Sigmoid colon (tissue), 7 donors: ENCODE measurements at regions of chr1 and their contacts with region 1.

Region 1: DNA sequence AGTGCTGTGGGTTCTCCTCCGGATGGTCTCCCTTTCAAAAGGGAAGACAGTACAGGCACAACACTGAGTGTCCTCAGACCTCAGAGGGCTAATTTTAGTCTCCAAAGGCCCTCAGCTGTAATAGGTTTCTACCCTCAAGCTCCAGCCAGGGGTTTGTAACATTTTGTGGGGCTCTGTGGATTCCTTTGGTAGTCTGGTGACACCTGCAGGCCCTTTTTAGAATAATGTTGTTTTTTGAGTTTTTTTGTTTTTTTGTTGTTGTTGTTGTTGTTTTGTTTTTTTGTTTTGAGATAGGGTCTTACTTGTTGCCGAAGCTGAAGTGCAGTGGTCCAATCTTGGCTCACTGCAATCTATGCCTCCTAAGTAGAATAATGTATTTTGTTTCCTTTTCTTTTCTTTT is 15.0 kb upstream of the TMEM201 start:
- DNase-seq: no peak
- H3K4me3 ChIP-seq: no peak overlapping the region
- H3K27ac ChIP-seq: no peak overlapping the region
- H3K4me1 ChIP-seq: no peaks in the 10 kb centered on the region
- H3K27me3 ChIP-seq: no peaks in the 10 kb centered on the region
- CTCF ChIP-seq: peak in 3 of 4 experiments; percentile 16 to 46 (median 38)
- EP300 ChIP-seq: no peak
- POLR2A ChIP-seq: no peak

Region 2: DNA sequence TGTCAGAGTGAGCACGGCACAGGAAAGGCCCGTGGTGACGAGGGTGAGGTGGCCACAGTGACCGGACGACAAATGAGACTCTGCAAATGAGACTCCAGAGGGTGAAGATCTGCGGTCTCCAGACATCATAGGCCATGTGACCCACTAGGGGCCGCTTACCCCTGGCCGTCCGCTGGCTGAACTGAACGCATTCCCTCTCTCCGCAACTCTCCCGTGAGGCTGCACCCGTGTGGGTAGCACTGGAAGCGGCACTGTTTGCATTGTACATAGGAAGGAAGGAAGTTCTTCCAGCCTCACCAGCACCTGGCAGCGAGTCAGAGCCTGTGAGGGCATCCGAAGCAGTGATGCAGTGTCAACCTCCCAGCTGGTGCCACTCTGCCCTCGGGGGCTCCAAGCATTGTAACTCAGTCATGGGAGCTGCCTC is 304.6 kb before region 1 on chr1:
- intact Hi-C with region 1: loop called (anchors 10 kb)
- DNase-seq: no peak
- H3K4me3 ChIP-seq: no peak overlapping the region
- H3K27ac ChIP-seq: no peak overlapping the region
- H3K4me1 ChIP-seq: peaks cover 0 to 27% (median 18%) of the 10 kb centered on the region in 4 donors
- H3K27me3 ChIP-seq: no peaks in the 10 kb centered on the region
- CTCF ChIP-seq: no peak
- EP300 ChIP-seq: no peak
- POLR2A ChIP-seq: no peak

Region 3: DNA sequence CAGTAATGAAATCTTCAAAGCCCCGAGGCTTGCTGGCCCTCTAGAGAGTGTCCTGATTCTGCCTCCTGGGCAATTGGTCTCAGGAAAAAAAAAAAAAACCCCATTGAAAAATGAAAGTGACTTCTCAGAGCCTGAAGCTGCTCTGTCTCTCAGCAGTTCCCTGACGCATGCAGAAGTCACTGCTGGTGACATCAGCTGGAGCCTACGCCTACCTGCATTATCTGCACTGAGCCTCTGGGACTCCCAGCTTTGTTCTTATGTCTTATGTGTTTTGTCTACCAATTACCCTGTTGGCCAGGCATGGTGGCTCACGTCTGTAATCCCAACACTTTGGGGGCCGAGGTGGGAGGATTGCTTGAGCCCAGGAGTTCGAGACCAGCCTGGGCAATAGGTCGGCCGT is 44.5 kb before region 1 on chr1:
- intact Hi-C with region 1: loop called (anchors 5 kb)
- DNase-seq: no peak
- H3K4me3 ChIP-seq: no peak overlapping the region
- H3K27ac ChIP-seq: no peak overlapping the region
- H3K4me1 ChIP-seq: peaks cover 0 to 9% (median 4%) of the 10 kb centered on the region in 4 donors
- H3K27me3 ChIP-seq: no peaks in the 10 kb centered on the region
- CTCF ChIP-seq: no peak
- EP300 ChIP-seq: no peak
- POLR2A ChIP-seq: no peak